Uterus (tissue), 4 donors: ENCODE measurements at regions of chr11 and their contacts with region 1.

Region 1: DNA sequence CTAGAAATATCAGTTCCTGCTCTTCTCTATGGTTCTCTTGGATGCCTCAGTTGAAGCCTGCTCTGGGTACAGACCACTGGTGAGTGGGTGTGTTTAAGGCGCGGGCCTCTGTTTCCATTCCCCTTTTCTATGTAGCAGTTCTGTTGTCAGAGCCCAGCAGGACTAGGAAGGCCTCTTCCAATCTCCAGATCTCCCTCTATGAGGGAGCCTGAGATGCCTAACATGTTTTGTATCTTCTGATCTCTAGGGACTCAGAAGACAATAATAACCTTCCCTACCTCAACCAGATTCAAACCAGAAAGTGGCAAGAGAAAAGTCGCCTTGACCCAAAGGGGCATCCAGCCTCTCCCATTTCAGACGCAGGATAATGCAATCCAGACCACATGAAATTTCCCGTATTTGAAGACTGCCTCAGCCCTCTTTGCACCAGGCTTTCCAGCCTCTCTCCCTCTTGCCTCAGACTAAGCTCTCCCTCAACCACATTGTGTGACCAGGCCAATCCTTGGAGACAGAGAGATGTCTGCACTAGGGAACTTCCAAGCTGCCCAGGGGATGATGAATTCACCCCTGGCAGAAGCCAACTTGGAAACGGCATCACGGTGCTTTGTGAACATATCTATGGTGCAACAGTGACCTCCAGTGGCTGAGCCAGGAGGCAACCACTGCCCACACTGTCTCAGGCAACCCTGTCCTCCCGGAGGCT is 150.1 kb upstream of the UBASH3B start:
- DNase-seq: peak; percentile 86 to 88
- H3K4me3 ChIP-seq: no peak overlapping the region
- H3K27ac ChIP-seq: peak overlapping the region; percentile 8 to 38
- H3K4me1 ChIP-seq: no peaks in the 10 kb centered on the region
- H3K27me3 ChIP-seq: no peaks in the 10 kb centered on the region
- CTCF ChIP-seq: peak; percentile 76 to 92 (median 85)
- POLR2A ChIP-seq: no peak

Region 2: GRCh38 chr11:122215244-122215992 is 290.0 kb before region 1 on chr11:
- intact Hi-C with region 1: loop called (anchors 10 kb)
- DNase-seq: peak; percentile 63 to 82
- H3K4me3 ChIP-seq: no peak overlapping the region
- H3K27ac ChIP-seq: peak overlapping the region; percentile 30 to 58
- H3K4me1 ChIP-seq: no peaks in the 10 kb centered on the region
- H3K27me3 ChIP-seq: no peaks in the 10 kb centered on the region
- CTCF ChIP-seq: peak; percentile 74 to 90 (median 81)
- POLR2A ChIP-seq: no peak

Region 3: GRCh38 chr11:122439911-122440810 is 65.3 kb before region 1 on chr11:
- intact Hi-C with region 1: no loop called
- DNase-seq: peak; percentile 25 to 40
- H3K4me3 ChIP-seq: peak overlapping the region; percentile 42 to 54
- H3K27ac ChIP-seq: peak overlapping the region; percentile 24 to 60
- H3K4me1 ChIP-seq: no peaks in the 10 kb centered on the region
- H3K27me3 ChIP-seq: no peaks in the 10 kb centered on the region
- CTCF ChIP-seq: no peak
- POLR2A ChIP-seq: no peak